ENCODE measurements at regions of chr1 and their contacts with region 1.

Region 1: DNA sequence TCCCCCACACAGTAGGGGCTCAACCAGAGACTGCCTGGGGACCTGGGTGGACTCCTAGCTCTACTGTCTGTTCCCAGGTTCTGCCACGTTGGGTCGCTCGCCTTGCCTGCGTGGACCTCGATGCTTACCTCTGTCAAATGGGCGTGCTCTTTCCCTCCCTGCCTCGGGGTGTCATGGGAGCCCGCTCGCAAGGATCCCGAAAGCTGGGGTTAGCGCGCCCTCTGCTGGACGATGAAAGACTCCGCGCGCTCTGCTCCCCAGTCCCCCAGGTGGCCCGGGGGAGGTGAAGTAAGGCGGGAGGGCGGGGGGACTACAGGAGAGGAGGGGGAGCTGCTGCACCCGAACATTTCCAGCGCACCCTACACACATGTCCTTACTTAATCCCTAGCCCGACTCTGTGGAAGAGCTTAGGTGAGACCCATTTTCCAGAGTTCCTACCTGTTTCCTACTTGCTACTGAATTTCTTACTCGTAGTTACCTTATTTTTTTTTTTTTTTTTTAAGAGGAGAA is 2.3 kb upstream of the BSND start:
- DNase-seq: peak; percentile 64 to 77 (median 70)
- H3K4me3 ChIP-seq: no peak overlapping the region
- H3K4me3 Mint-ChIP-seq: peak overlapping the region in 1 of 2 donors; percentile 77
- H3K27ac ChIP-seq: no peak overlapping the region
- H3K27ac Mint-ChIP-seq: peak overlapping the region in 4 of 7 donors; percentile 24 to 71 (median 55)
- H3K4me1 ChIP-seq: peaks cover 9 to 16% of the 10 kb centered on the region in 2 donors
- H3K4me1 Mint-ChIP-seq: peaks cover 17% of the 10 kb centered on the region
- H3K27me3 ChIP-seq: peaks cover 14 to 43% of the 10 kb centered on the region in 2 donors
- H3K27me3 Mint-ChIP-seq: peaks cover 38 to 59% (median 40%) of the 10 kb centered on the region in 3 donors
- CTCF ChIP-seq: peak; percentile 94

Region 2: DNA sequence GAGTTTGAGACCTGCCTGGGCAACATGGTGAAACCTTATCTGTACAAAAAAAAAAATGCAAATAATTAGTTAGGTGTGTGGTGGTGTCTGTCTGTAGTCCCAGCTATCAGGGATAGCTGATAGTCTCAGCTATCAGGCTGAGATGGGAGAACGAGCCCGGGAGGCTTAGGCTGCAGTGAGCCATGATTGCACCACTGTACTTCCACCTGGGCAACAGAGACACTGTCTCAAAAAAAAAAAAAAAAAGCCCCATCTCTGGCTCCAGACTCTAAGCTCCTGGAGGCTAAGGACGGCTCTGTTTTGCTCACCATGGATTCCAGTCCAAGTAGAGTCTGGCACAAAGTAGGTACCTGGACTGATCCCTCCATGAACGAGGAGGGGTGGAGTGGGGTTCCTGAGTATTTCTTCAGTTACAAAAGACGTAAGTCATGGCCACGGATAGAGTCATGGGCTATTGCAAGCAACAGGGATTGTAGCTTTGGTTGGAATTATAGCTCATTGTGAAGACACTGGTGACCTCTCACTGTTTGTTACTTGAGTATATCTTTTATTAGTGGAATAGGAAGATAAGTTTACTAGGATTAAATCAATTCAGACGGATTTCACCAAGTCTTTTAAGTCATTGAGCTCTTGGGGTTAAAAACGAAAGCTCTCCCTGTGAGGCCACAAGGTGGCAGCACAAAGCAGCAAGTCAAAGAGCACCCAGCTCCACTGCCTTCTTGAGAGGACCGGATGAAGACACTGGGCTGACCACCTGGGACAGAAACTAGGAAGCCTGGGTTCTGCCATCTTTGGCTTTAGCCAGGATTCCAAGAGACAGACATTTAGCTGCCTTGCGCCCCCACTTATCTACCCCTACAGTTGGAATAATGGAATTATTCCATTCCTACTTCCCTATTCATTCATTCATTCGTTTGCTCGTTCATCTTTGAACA is 51.5 kb before region 1 on chr1:
- intact Hi-C with region 1: loop called in 1 of 2 experiments (anchors 2 kb)
- DNase-seq: peak; percentile 74 to 80 (median 77)
- H3K4me3 ChIP-seq: peak overlapping the region in 1 of 3 experiments; percentile 17
- H3K4me3 Mint-ChIP-seq: peak overlapping the region in 1 of 2 donors; percentile 68
- H3K27ac ChIP-seq: peak overlapping the region in 1 of 2 donors; percentile 41
- H3K27ac Mint-ChIP-seq: peak overlapping the region in 2 of 7 donors; percentile 43 to 58
- H3K4me1 ChIP-seq: peaks cover 41 to 52% of the 10 kb centered on the region in 2 donors
- H3K4me1 Mint-ChIP-seq: peaks cover 43% of the 10 kb centered on the region
- H3K27me3 ChIP-seq: no peaks in the 10 kb centered on the region
- H3K27me3 Mint-ChIP-seq: peaks cover 0 to 2% (median 2%) of the 10 kb centered on the region in 3 donors
- CTCF ChIP-seq: peak; percentile 91

Region 3: DNA sequence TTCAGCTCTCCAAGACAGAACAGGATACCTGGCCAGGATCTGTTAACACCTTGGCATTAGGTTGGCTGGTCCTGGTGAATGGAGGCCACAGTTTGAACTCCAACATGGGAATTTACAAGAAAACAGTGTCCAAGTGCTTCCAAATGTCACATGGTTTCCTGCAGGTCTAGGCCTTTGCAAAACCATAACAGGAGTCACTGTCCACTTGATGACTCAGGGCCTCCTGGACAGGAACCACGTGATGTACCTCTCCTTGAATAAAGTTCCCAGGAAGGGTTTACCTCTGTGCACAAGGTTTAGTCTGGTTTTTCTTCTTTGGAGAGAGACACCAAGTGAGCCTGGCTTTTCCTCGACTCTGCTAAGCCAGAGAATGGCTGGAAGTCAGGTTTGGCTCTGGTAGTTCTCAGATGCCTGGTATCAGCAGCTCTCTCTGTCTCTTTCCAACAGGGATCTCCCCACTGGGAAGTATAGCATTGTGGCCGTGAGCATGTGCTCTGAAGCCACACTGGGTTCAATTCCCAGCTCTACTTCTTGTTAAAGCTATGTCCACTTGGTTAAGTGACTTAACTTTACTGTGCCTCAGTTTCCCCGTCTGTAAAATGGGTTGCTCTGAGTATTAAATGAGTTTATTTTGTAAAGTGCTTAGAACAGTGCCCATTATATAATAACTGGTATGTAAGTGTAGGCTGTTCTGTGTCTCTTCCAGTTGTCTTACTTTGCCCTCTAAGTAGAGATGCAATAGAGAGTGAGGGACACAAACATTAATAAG is 43.3 kb before region 1 on chr1:
- intact Hi-C with region 1: loop called in 1 of 2 experiments (anchors 2 kb)
- DNase-seq: no peak
- H3K4me3 ChIP-seq: no peak overlapping the region
- H3K4me3 Mint-ChIP-seq: no peak overlapping the region
- H3K27ac ChIP-seq: no peak overlapping the region
- H3K27ac Mint-ChIP-seq: peak overlapping the region in 2 of 7 donors; percentile 12 to 15
- H3K4me1 ChIP-seq: peaks cover 48 to 58% of the 10 kb centered on the region in 2 donors
- H3K4me1 Mint-ChIP-seq: peaks cover 50% of the 10 kb centered on the region
- H3K27me3 ChIP-seq: no peaks in the 10 kb centered on the region
- H3K27me3 Mint-ChIP-seq: no peaks in the 10 kb centered on the region
- CTCF ChIP-seq: no peak

Region 4: DNA sequence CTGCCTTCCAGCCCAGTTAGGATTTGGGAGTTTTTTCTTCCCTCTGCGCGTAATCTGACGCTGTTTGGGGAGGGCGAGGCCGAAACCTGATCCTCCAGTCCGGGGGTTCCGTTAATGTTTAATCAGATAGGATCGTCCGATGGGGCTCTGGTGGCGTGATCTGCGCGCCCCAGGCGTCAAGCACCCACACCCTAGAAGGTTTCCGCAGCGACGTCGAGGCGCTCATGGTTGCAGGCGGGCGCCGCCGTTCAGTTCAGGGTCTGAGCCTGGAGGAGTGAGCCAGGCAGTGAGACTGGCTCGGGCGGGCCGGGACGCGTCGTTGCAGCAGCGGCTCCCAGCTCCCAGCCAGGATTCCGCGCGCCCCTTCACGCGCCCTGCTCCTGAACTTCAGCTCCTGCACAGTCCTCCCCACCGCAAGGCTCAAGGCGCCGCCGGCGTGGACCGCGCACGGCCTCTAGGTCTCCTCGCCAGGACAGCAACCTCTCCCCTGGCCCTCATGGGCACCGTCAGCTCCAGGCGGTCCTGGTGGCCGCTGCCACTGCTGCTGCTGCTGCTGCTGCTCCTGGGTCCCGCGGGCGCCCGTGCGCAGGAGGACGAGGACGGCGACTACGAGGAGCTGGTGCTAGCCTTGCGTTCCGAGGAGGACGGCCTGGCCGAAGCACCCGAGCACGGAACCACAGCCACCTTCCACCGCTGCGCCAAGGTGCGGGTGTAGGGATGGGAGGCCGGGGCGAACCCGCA is 43.1 kb after region 1 on chr1 and contains the start of gene PCSK9:
- intact Hi-C with region 1: no loop called
- DNase-seq: no peak
- H3K4me3 ChIP-seq: no peak within 1 kb of the TSS
- H3K4me3 Mint-ChIP-seq: peak within 1 kb of the TSS; percentile 31 to 88
- H3K27ac ChIP-seq: no peak within 1 kb of the TSS
- H3K27ac Mint-ChIP-seq: no peak within 1 kb of the TSS
- H3K4me1 ChIP-seq: peaks cover 17 to 27% of the 10 kb centered on the region in 2 donors
- H3K4me1 Mint-ChIP-seq: peaks cover 36% of the 10 kb centered on the region
- H3K27me3 ChIP-seq: peaks cover 30 to 49% of the 10 kb centered on the region in 2 donors
- H3K27me3 Mint-ChIP-seq: peaks cover 53 to 68% (median 57%) of the 10 kb centered on the region in 3 donors
- CTCF ChIP-seq: no peak
- polyA plus RNA-seq, gene PCSK9: not detected

Region 5: GRCh38 chr1:55192093-55192492 is 195.7 kb after region 1 on chr1:
- intact Hi-C with region 1: no loop called
- DNase-seq: no peak
- H3K4me3 ChIP-seq: no peak overlapping the region
- H3K4me3 Mint-ChIP-seq: no peak overlapping the region
- H3K27ac ChIP-seq: no peak overlapping the region
- H3K27ac Mint-ChIP-seq: no peak overlapping the region
- H3K4me1 ChIP-seq: peaks cover 30% of the 10 kb centered on the region in 2 donors
- H3K4me1 Mint-ChIP-seq: peaks cover 46% of the 10 kb centered on the region
- H3K27me3 ChIP-seq: no peaks in the 10 kb centered on the region
- H3K27me3 Mint-ChIP-seq: peaks cover 0 to 2% (median 0%) of the 10 kb centered on the region in 3 donors
- CTCF ChIP-seq: no peak